Activated T-helper 2 cell treated with anti-CD3 and anti-CD28 coated beads, Interferon-gamma antibody, Interleukin-2, Interleukin-4, amounts not matched to agents 10 μg/mL and 5 μg/mL and 100 μg/mL, durations not matched to agents 14 hours and 24 hours and 36 hours (primary cell): ENCODE measurements at regions of chr17 and their contacts with region 1.

Region 1: GRCh38 chr17:29148790-29149430 is 31.3 kb downstream of the MYO18A start:
- DNase-seq: peak; percentile 91
- H3K4me3 Mint-ChIP-seq: peak overlapping the region; percentile 72
- H3K27ac Mint-ChIP-seq: peak overlapping the region; percentile 82
- H3K4me1 Mint-ChIP-seq: peaks cover 45% of the 10 kb centered on the region
- H3K27me3 Mint-ChIP-seq: no peaks in the 10 kb centered on the region

Region 2: DNA sequence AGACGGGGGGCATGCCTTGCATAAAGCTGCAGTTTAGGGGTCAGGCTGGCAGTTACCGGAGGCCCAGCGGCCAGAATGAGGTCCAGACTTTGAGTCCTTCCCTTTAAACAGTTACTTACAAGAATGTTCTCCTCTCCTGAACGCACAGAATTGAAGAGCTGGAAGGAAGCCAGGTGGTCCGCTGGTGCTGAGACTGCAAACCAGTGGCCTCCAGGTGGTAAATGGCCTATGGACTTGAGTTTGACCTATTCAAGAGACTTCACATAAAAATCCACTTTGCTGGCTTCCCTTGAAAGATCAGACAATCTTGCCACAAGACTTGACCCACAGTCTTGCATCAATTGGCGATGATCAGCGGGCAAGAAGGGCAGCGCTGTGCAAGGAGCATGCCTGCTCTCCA is 128.3 kb before region 1 on chr17:
- intact Hi-C with region 1: no loop called
- DNase-seq: no peak
- H3K4me3 Mint-ChIP-seq: no peak overlapping the region
- H3K27ac Mint-ChIP-seq: no peak overlapping the region
- H3K4me1 Mint-ChIP-seq: peaks cover 4% of the 10 kb centered on the region
- H3K27me3 Mint-ChIP-seq: peaks cover 57% of the 10 kb centered on the region

Region 3: DNA sequence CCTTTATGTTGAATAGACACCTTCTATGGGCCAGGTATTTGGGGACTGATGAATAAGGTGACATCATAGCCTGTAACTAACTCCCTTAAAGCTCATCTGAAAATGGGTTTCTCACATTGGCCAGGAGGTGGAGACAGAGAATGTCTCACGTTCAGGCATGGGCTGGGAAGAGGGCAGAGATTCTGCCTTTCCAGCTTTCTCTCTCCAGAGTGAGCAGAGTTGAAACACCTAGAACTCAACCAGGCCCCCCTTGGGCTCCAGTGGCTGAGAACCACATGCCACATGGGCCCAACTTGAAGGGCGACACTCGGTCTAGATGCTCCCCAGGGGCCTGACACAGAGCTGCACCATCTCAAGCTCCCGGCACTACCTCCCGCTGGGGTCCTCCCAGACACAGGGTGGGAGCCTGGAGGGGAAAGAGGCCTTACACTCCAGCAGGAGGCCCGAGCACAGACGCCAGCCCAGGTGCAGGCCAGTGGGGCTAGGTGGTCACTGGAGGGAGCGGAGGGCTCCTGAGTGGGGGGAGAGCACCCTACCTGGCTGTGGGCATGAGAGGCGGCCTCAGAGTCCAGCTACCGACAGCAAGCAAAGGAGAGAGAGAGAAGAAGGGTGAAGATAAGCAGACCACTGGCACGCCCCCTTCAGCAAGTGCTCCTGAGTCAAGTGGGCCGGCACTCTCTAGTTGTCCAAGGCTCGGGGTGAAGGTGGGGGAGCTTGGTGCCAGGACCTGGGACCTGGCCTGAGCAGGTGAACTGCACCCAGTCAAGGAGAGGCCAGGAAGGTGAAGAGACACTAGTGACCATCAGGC is 24.6 kb before region 1 on chr17:
- intact Hi-C with region 1: loop called (anchors 1 kb)
- DNase-seq: no peak
- H3K4me3 Mint-ChIP-seq: no peak overlapping the region
- H3K27ac Mint-ChIP-seq: no peak overlapping the region
- H3K4me1 Mint-ChIP-seq: no peaks in the 10 kb centered on the region
- H3K27me3 Mint-ChIP-seq: no peaks in the 10 kb centered on the region

Region 4: DNA sequence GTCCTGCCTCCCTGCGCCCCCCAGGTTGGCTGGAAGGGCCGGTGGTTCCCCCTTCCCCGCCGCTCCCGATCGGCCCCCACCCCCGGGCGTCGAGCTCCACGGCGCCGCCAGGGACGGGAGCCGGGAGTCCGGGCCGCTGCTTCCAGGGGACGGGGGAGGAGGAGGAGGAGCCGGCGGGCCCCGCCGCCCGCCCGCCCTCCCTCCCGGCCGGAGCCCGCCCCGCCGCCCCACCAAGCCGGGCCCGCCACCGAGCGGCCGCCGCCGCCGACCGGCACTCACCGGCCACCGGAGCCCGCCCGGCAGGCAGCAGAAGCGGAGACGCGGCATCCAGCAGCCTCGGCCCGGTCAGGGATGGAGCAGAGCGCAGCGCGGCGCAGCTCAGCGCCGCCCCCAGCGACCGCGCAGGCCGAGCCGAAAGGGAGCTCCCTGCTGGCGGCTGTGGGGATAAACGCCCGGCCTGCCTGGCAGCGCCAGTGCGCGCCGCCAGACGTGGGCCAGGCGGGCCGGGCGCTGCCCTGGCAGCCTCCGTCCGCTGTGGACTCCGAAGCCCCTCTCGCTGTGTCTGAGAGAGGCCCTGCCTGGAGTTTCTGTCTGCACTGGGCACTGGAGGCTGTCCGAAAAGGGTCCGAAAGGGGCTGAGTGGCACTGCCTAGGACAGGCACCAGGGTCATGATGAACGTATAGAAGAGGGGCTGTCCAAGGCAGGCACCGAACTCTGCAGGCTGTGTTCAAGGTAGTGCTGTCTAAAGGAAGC is 31.3 kb after region 1 on chr17 and contains the start of gene MYO18A:
- intact Hi-C with region 1: loop called (anchors 1 kb)
- DNase-seq: peak; percentile 73
- H3K4me3 Mint-ChIP-seq: peak within 1 kb of the TSS; percentile 57
- H3K27ac Mint-ChIP-seq: no peak within 1 kb of the TSS
- H3K4me1 Mint-ChIP-seq: peaks cover 12% of the 10 kb centered on the region
- H3K27me3 Mint-ChIP-seq: peaks cover 11% of the 10 kb centered on the region
- total RNA-seq, gene MYO18A: 49.5 and 50.3 TPM in 2 replicates

Region 5: GRCh38 chr17:29219378-29220047 is 70.6 kb after region 1 on chr17:
- intact Hi-C with region 1: loop called (anchors 1 kb)
- DNase-seq: peak; percentile 62
- H3K4me3 Mint-ChIP-seq: no peak overlapping the region
- H3K27ac Mint-ChIP-seq: no peak overlapping the region
- H3K4me1 Mint-ChIP-seq: peaks cover 6% of the 10 kb centered on the region
- H3K27me3 Mint-ChIP-seq: peaks cover 3% of the 10 kb centered on the region

Region 6: DNA sequence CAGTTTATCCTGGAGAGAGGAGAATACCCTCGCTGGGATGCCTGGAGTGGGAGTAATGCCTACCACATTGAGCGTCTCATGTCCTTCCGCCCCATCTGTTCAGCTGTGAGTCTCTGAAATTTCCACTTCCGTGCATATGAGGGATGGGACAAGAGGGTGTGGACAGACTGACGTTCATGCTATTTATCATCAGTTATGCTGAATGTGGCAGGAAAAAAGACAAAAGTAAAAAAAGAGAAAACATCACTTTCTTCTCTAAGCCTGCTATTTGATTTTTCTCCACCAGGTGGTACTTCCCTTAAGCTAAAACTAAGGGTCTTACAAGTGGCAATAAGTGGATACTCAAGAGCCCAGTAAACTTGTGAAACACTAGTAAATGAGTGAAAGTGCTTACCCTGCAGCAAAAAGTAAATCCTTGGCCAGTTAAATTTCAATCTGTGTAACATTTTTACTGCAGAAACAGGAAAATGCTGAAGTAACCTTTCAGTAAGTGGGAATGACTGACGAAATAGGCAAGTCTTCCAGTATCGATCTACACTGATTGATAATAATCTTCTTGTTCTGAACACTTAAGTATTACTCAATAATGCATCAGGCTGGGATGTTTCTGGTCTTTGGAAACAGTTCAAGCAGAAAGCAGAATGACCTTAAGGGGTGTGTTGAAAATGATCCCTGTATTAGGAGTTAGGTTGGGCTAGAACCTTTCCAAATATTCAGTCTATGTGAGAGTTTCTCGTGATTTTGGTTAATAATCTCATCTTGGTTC is 103.4 kb after region 1 on chr17:
- intact Hi-C with region 1: no loop called
- DNase-seq: no peak
- H3K4me3 Mint-ChIP-seq: no peak overlapping the region
- H3K27ac Mint-ChIP-seq: no peak overlapping the region
- H3K4me1 Mint-ChIP-seq: peaks cover 7% of the 10 kb centered on the region
- H3K27me3 Mint-ChIP-seq: no peaks in the 10 kb centered on the region

Region 7: GRCh38 chr17:29568331-29569244 is 419.7 kb after region 1 on chr17 and contains the start of gene TP53I13:
- intact Hi-C with region 1: loop called (anchors 10 kb)
- DNase-seq: peak; percentile 85
- H3K4me3 Mint-ChIP-seq: peak within 1 kb of the TSS; percentile 94
- H3K27ac Mint-ChIP-seq: peak within 1 kb of the TSS; percentile 96
- H3K4me1 Mint-ChIP-seq: peaks cover 25% of the 10 kb centered on the region
- H3K27me3 Mint-ChIP-seq: no peaks in the 10 kb centered on the region
- total RNA-seq, gene TP53I13: 78.2 and 84.8 TPM in 2 replicates